Caco-2 (cell line): ENCODE measurements at regions of chrX and their contacts with region 1.

Region 1: DNA sequence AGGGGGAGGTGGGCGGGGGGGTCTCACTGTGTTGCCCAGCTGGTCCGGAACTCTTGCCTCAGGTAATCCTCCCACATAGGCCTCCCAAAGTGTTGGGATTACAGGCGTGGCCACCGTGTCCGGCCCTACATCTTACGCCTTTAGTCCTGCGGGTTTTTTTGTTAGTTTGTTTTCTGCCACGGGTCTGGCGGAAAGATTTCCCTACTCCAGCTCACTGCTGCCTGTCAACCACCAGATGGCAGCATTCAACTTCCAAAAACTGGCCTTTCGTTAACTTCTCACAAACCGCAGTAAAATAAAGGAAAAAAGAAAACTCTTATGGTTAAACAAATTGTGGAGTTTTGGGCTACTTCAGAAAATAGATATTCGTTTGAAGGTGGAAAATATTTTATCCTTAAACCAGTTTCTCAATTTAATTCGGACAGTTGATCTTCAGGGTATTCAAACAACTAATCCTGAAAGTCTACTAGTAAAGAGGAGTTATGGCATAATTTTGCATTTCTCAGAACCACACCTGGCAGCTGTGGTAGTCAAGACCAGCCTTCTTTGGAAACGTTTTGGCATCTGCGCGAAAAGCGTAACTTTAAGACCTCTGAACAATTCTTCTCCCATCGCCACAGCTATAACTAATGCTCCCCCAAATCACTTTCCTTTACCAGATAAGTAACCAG is 41.1 kb downstream of the LUZP4 start:
- DNase-seq: peak; percentile 43 to 50
- H3K4me3 ChIP-seq: 0 out of 2 replicates have a peak overlapping the region, but pooled peaks have one; percentile 15
- H3K4me3 Mint-ChIP-seq: peak overlapping the region; percentile 53
- H3K27ac Mint-ChIP-seq: no peak overlapping the region
- H3K4me1 ChIP-seq: no peaks in the 10 kb centered on the region
- H3K4me1 Mint-ChIP-seq: peaks cover 6% of the 10 kb centered on the region
- H3K27me3 ChIP-seq: no peaks in the 10 kb centered on the region
- H3K27me3 Mint-ChIP-seq: no peaks in the 10 kb centered on the region
- CTCF ChIP-seq: peak; percentile 65 to 68

Region 2: DNA sequence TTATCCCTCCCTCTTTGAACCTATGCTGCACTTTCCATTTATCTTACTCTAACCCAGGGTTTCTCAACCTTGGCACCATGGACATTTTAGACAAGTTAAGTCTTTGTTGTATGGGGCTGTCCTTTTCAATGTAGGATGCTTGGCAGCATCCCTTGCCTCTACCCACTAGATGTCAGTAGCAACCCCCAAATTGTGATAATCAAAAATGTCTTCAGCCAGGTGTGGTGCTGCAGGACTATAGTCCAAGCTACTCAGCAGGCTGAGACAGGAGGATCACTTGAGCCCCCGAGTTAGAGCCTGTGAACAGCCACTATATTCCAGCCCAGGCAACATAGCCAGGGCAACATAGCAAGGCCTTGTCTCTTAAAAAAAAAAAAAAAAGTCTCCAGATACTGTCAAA is 103.7 kb before region 1 on chrX:
- CTCF ChIA-PET with region 1: no interaction called
- POLR2A ChIA-PET with region 1: no interaction called
- intact Hi-C with region 1: loop called (anchors 2 kb)
- DNase-seq: peak; percentile 38
- H3K4me3 ChIP-seq: no peak overlapping the region
- H3K4me3 Mint-ChIP-seq: no peak overlapping the region
- H3K27ac Mint-ChIP-seq: no peak overlapping the region
- H3K4me1 ChIP-seq: no peaks in the 10 kb centered on the region
- H3K4me1 Mint-ChIP-seq: no peaks in the 10 kb centered on the region
- H3K27me3 ChIP-seq: no peaks in the 10 kb centered on the region
- H3K27me3 Mint-ChIP-seq: peaks cover 3% of the 10 kb centered on the region
- CTCF ChIP-seq: peak; percentile 35 to 74

Region 3: DNA sequence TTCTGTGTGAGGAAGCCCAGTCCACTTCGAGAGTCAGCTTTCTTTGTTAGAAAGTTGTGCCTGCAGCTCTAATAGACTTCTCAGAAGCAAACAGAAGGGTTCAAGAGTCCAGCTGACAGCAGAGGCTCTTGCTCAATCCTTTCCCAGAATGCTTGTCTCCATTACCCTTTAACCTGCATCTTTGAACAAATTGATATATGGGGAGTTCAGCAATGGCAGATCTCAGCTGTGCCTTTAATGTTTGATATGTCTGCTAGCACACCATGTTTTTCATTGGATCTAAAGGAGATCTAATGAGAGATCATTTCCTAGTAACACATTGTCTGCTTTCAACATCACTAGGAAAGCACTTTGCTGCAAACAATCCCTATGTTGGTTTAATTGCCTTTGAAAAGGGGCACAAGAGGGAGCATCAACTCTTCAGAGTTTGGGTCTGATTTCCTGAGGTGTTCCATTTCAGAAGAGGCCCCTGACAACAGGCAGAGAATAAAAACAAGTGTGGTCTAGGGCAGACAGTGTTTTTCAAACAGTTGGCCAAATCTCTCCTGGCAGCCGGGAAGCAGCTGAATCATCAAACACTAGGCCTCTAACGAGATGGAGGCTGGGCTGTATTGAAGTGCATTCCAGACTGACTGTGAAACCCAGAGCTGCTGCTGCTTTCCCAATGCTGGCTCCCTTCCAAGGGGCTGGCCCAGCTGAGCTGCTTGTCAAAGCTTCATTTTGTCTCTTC is 14.4 kb after region 1 on chrX:
- CTCF ChIA-PET with region 1: no interaction called
- POLR2A ChIA-PET with region 1: no interaction called
- intact Hi-C with region 1: loop called (anchors 2 kb)
- DNase-seq: peak; percentile 71 to 82
- H3K4me3 ChIP-seq: no peak overlapping the region
- H3K4me3 Mint-ChIP-seq: peak overlapping the region; percentile 14
- H3K27ac Mint-ChIP-seq: peak overlapping the region; percentile 81
- H3K4me1 ChIP-seq: peaks cover 28% of the 10 kb centered on the region
- H3K4me1 Mint-ChIP-seq: peaks cover 10% of the 10 kb centered on the region
- H3K27me3 ChIP-seq: no peaks in the 10 kb centered on the region
- H3K27me3 Mint-ChIP-seq: no peaks in the 10 kb centered on the region
- CTCF ChIP-seq: no peak

Region 4: GRCh38 chrX:115560978-115561604 is 230.5 kb after region 1 on chrX and contains the start of gene PLS3:
- CTCF ChIA-PET with region 1: no interaction called
- POLR2A ChIA-PET with region 1: no interaction called
- intact Hi-C with region 1: loop called (anchors 1 kb)
- DNase-seq: peak; percentile 86 to 92
- H3K4me3 ChIP-seq: peak within 1 kb of the TSS; percentile 85
- H3K4me3 Mint-ChIP-seq: peak within 1 kb of the TSS; percentile 90
- H3K27ac Mint-ChIP-seq: peak within 1 kb of the TSS; percentile 94
- H3K4me1 ChIP-seq: peaks cover 18% of the 10 kb centered on the region
- H3K4me1 Mint-ChIP-seq: no peaks in the 10 kb centered on the region
- H3K27me3 ChIP-seq: no peaks in the 10 kb centered on the region
- H3K27me3 Mint-ChIP-seq: no peaks in the 10 kb centered on the region
- CTCF ChIP-seq: no peak
- total RNA-seq, gene PLS3: 211 and 213 TPM in 2 replicates

Region 5: GRCh38 chrX:115642895-115643530 is 312.4 kb after region 1 on chrX:
- CTCF ChIA-PET with region 1: no interaction called
- POLR2A ChIA-PET with region 1: no interaction called
- intact Hi-C with region 1: loop called (anchors 1 kb)
- DNase-seq: peak in 1 of 2 experiments; percentile 48
- H3K4me3 ChIP-seq: no peak overlapping the region
- H3K4me3 Mint-ChIP-seq: no peak overlapping the region
- H3K27ac Mint-ChIP-seq: no peak overlapping the region
- H3K4me1 ChIP-seq: no peaks in the 10 kb centered on the region
- H3K4me1 Mint-ChIP-seq: peaks cover 10% of the 10 kb centered on the region
- H3K27me3 ChIP-seq: no peaks in the 10 kb centered on the region
- H3K27me3 Mint-ChIP-seq: no peaks in the 10 kb centered on the region
- CTCF ChIP-seq: peak; percentile 54 to 66

Region 6: GRCh38 chrX:115679460-115679859 is 348.8 kb after region 1 on chrX:
- CTCF ChIA-PET with region 1: interaction called, 6 read pairs
- POLR2A ChIA-PET with region 1: no interaction called
- intact Hi-C with region 1: loop called (anchors 1 kb)
- DNase-seq: peak in 1 of 2 experiments; percentile 8
- H3K4me3 ChIP-seq: no peak overlapping the region
- H3K4me3 Mint-ChIP-seq: no peak overlapping the region
- H3K27ac Mint-ChIP-seq: no peak overlapping the region
- H3K4me1 ChIP-seq: no peaks in the 10 kb centered on the region
- H3K4me1 Mint-ChIP-seq: no peaks in the 10 kb centered on the region
- H3K27me3 ChIP-seq: no peaks in the 10 kb centered on the region
- H3K27me3 Mint-ChIP-seq: no peaks in the 10 kb centered on the region
- CTCF ChIP-seq: peak; percentile 33 to 36

Region 7: DNA sequence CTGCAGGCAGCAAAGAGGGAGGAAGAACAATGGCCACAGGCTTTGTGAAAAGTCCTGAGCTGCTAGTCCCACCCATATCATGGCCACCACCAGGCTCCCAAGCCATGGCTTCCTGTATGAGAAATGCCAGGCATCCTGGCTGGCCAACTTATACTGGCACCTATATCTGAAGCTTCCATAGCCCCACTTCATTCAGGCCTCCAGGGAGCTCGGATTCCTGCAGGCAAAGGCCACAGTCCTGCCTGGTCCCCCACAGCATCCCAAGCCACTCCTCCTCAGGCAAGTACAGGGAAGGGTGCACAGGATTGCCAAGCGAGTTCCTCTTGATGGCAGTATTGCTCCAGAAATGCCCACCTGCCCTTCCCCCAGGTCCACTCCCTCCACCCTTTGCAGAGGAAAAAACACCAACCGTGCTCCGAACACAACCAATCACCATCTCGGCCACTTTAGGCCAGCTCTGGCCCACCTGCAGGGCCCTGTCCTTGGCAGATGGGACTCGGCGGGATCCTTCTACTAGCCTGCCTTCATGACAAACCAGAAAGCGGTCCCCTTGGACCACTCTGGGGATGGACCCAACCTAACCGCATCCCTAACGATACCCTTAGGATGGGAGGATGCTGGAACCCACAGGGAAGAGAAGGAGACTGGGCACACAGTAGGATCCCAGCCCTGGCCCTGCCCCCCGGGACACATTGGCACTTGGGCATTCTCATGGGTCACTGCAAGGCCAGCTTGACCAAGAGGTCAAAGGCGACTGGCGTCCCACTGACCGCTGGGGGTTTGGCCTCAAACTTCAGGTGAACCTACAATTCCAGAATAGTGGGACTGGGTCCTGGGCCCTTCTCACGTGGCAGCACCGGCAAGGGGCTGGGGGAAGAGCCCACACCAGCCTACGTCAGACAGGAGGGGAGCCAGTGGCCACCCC is 619.5 kb after region 1 on chrX:
- CTCF ChIA-PET with region 1: no interaction called
- POLR2A ChIA-PET with region 1: no interaction called
- intact Hi-C with region 1: loop called (anchors 5 kb)
- DNase-seq: peak in 1 of 2 experiments; percentile 44
- H3K4me3 ChIP-seq: no peak overlapping the region
- H3K4me3 Mint-ChIP-seq: no peak overlapping the region
- H3K27ac Mint-ChIP-seq: no peak overlapping the region
- H3K4me1 ChIP-seq: no peaks in the 10 kb centered on the region
- H3K4me1 Mint-ChIP-seq: no peaks in the 10 kb centered on the region
- H3K27me3 ChIP-seq: no peaks in the 10 kb centered on the region
- H3K27me3 Mint-ChIP-seq: no peaks in the 10 kb centered on the region
- CTCF ChIP-seq: no peak